ENCODE measurements at regions of chrX and their contacts with region 1.

Region 1: GRCh38 chrX:13223868-13224555 is 95.8 kb downstream of the ATXN3L start:
- DNase-seq: peak; percentile 49 to 89
- H3K4me3 ChIP-seq: no peak overlapping the region
- H3K27ac ChIP-seq: peak overlapping the region; percentile 86
- H3K4me1 ChIP-seq: peaks cover 20% of the 10 kb centered on the region
- H3K27me3 ChIP-seq: no peaks in the 10 kb centered on the region
- CTCF ChIP-seq: no peak

Region 2: DNA sequence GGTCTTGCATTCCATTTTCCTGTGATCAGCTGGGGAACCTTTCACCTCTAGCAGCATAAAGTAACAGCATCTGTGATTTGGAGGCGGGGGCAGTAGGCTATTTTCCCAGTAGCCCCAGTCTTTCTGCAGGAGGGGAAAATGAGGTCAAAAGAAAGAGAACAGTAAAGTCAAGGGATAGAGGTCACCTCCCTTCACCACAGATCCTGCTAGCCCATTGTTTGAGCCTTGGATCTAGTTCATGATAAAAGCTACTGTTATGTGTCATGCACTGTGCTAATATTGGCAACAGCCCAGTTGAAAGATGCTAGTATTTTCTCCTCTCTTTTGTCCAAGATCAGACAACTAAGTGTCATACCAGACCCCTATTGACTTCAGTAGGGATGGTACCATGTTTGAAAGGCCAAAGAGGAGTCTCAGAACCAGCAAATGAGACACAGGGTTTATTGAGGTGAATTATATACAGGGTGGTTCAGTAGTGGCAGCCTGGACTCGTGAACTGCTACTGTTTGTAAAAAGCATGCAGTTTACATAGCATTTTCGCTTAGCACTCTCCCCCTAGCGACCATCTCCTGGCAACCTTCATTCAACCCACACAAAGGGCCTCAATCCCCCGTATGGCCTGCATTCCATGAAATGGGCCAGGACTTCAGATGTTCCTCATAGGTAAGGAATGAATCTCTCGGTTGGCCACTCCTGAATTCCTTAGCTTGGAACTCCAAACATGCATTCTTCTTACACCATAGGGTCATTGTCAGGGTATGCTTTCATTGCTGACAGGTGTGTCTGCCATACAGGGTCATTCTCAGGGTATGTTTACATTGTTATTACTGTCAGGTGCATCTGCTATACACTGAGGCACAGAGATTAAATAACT is 1255.8 kb before region 1 on chrX:
- CTCF ChIA-PET with region 1: no interaction called
- POLR2A ChIA-PET with region 1: no interaction called
- intact Hi-C with region 1: loop called (anchors 5 kb)
- DNase-seq: peak; percentile 72 to 93
- H3K4me3 ChIP-seq: no peak overlapping the region
- H3K27ac ChIP-seq: peak overlapping the region; percentile 92
- H3K4me1 ChIP-seq: peaks cover 37% of the 10 kb centered on the region
- H3K27me3 ChIP-seq: no peaks in the 10 kb centered on the region
- CTCF ChIP-seq: no peak

Region 3: DNA sequence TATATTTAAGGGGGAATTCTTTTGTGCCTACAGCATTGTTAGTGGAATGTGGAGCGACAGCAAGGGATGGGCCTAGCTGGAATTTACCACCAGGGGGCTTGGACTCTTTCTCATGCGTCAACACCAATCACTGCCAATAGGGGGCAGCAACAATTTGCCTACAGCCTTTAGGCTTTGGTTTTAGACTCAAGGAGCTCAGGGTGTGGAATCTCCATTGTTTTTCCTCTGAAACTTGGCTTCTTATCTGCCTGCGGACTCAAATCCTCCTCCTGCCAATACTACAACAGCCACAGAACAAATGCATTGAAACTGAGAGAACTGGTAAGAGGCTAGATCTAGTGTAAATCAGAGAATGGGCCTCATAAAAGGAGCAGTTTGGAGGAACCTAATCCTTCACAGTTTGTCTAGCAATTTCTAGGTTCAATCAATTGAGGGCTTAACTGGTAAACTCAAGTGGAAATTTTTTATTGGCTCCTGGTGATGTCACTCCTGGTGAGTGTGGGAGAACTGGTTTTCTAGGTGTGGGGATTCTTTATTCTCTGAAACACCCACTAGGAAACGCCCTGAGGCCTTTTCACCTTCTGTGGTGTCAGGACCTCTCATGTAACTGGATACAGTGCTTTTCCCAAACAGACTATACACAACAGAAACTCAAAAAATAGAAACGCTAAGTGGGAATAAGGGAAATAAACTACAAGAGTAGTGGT is 277.0 kb before region 1 on chrX:
- CTCF ChIA-PET with region 1: interaction called, 16 read pairs
- POLR2A ChIA-PET with region 1: interaction called, 13 read pairs
- intact Hi-C with region 1: loop called (anchors 1 kb)
- DNase-seq: peak; percentile 87 to 94
- H3K4me3 ChIP-seq: peak overlapping the region; percentile 40; the same call in 1 of the 2 replicates
- H3K27ac ChIP-seq: peak overlapping the region; percentile 98
- H3K4me1 ChIP-seq: peaks cover 35% of the 10 kb centered on the region
- H3K27me3 ChIP-seq: no peaks in the 10 kb centered on the region
- CTCF ChIP-seq: peak; percentile 93

Region 4: GRCh38 chrX:13029341-13029740 is 194.7 kb before region 1 on chrX:
- CTCF ChIA-PET with region 1: no interaction called
- POLR2A ChIA-PET with region 1: no interaction called
- intact Hi-C with region 1: loop called (anchors 1 kb)
- DNase-seq: peak; percentile 74 to 81
- H3K4me3 ChIP-seq: peak overlapping the region; percentile 37; the same call in 1 of the 2 replicates
- H3K27ac ChIP-seq: peak overlapping the region; percentile 99
- H3K4me1 ChIP-seq: peaks cover 56% of the 10 kb centered on the region
- H3K27me3 ChIP-seq: no peaks in the 10 kb centered on the region
- CTCF ChIP-seq: no peak

Region 5: DNA sequence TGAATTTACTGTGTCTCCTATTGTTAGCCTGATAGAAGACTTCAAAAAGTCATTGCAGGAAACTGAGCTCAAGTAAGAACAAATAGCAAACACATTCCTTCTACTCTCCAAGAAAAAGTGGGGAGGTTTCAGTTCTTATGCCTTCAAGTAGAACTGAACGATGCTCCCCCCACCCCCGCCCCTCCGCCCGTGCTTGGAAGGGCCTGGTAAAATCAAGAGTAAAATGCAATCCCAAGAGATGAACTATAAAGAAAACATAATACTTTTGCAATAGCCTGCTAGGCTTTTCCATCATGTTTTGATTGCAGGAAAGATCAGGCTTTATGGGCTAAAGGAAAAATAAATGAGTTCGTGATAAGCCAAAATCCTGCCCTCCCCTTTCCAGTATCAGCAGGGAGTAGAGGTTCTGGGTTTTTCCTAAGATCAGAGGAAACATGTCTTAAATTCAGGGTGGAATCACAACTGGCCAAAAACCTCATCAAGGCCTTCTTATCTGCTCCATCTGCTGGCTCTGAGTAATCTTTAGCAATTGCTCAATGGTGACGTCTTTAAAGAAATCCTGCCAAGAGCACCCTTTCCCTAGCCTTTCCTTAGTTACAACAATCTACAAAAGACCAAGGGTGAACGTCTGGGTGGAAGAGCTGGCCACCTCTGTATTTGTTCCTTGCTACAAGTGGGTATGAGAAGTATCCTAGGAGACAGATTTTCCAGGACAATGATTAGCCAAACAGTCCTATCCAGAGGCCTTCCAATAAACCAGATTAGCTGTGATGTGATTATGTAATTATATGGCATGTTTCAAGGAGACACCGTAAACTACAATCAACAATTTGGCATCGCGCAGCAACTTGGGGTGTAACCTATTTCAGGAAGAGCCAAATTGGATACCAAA is 113.3 kb before region 1 on chrX:
- CTCF ChIA-PET with region 1: interaction called, 5 read pairs
- POLR2A ChIA-PET with region 1: interaction called, 14 read pairs
- intact Hi-C with region 1: no loop called
- DNase-seq: peak; percentile 40 to 83
- H3K4me3 ChIP-seq: 0 out of 2 replicates have a peak overlapping the region, but pooled peaks have one; percentile 24
- H3K27ac ChIP-seq: peak overlapping the region; percentile 91
- H3K4me1 ChIP-seq: peaks cover 24% of the 10 kb centered on the region
- H3K27me3 ChIP-seq: no peaks in the 10 kb centered on the region
- CTCF ChIP-seq: no peak

Region 6: GRCh38 chrX:13194291-13195103 is 29.5 kb before region 1 on chrX:
- CTCF ChIA-PET with region 1: interaction called, 4 read pairs
- POLR2A ChIA-PET with region 1: no interaction called
- intact Hi-C with region 1: loop called (anchors 2 kb)
- DNase-seq: peak in 1 of 2 experiments; percentile 90
- H3K4me3 ChIP-seq: peak overlapping the region; percentile 8; the same call in 1 of the 2 replicates
- H3K27ac ChIP-seq: peak overlapping the region; percentile 93
- H3K4me1 ChIP-seq: peaks cover 74% of the 10 kb centered on the region
- H3K27me3 ChIP-seq: no peaks in the 10 kb centered on the region
- CTCF ChIP-seq: no peak

Region 7: GRCh38 chrX:13263560-13264251 is 39.7 kb after region 1 on chrX:
- CTCF ChIA-PET with region 1: no interaction called
- POLR2A ChIA-PET with region 1: no interaction called
- intact Hi-C with region 1: no loop called
- DNase-seq: no peak
- H3K4me3 ChIP-seq: no peak overlapping the region
- H3K27ac ChIP-seq: no peak overlapping the region
- H3K4me1 ChIP-seq: no peaks in the 10 kb centered on the region
- H3K27me3 ChIP-seq: no peaks in the 10 kb centered on the region
- CTCF ChIP-seq: no peak

Region 8: GRCh38 chrX:13398073-13398823 is 174.2 kb after region 1 on chrX:
- CTCF ChIA-PET with region 1: no interaction called
- POLR2A ChIA-PET with region 1: no interaction called
- intact Hi-C with region 1: loop called (anchors 1 kb)
- DNase-seq: peak; percentile 84 to 98
- H3K4me3 ChIP-seq: no peak overlapping the region
- H3K27ac ChIP-seq: peak overlapping the region; percentile 99
- H3K4me1 ChIP-seq: peaks cover 39% of the 10 kb centered on the region
- H3K27me3 ChIP-seq: no peaks in the 10 kb centered on the region
- CTCF ChIP-seq: no peak

Measured in PC-9 (cell line).